ENCODE measurements at regions of chrX and their contacts with region 1.

Region 1: GRCh38 chrX:134396174-134396573 is 63.8 kb upstream of the HPRT1 start:
- DNase-seq: peak; percentile 16
- H3K4me3 ChIP-seq: no peak overlapping the region
- H3K27ac ChIP-seq: no peak overlapping the region
- H3K4me1 ChIP-seq: no peaks in the 10 kb centered on the region
- H3K27me3 ChIP-seq: no peaks in the 10 kb centered on the region
- CTCF ChIP-seq: peak; percentile 14 to 36
- POLR2A ChIP-seq: no peak

Region 2: GRCh38 chrX:132631579-132632232 is 1764.5 kb before region 1 on chrX:
- CTCF ChIA-PET with region 1: no interaction called
- POLR2A ChIA-PET with region 1: no interaction called
- dilution Hi-C with region 1: no loop called
- intact Hi-C with region 1: no loop called
- DNase-seq: peak; percentile 33
- H3K4me3 ChIP-seq: no peak overlapping the region
- H3K27ac ChIP-seq: no peak overlapping the region
- H3K4me1 ChIP-seq: no peaks in the 10 kb centered on the region
- H3K27me3 ChIP-seq: no peaks in the 10 kb centered on the region
- CTCF ChIP-seq: peak; percentile 27 to 30
- POLR2A ChIP-seq: no peak

Region 3: DNA sequence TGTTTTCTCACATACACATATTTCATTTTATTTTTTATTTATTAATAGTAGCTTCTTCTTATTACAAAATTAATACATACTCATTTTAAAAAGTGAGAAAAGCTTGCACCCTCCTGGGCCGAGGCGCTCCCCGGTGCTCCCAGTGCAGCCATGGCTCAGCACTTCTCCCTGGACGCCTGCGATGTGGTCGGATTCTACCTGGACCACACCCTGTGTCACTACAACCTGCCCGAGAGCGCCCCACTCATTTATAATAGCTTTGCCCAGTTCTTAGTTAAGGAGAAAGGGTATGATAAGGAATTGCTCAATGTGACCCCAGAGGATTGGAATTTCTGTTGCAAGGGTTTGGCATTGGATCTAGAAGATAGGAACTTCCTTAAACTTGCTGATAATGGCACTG is 124.0 kb before region 1 on chrX:
- CTCF ChIA-PET with region 1: no interaction called
- POLR2A ChIA-PET with region 1: no interaction called
- dilution Hi-C with region 1: no loop called
- intact Hi-C with region 1: no loop called
- DNase-seq: no peak
- H3K4me3 ChIP-seq: no peak overlapping the region
- H3K27ac ChIP-seq: no peak overlapping the region
- H3K4me1 ChIP-seq: no peaks in the 10 kb centered on the region
- H3K27me3 ChIP-seq: no peaks in the 10 kb centered on the region
- CTCF ChIP-seq: no peak
- POLR2A ChIP-seq: no peak

Region 4: DNA sequence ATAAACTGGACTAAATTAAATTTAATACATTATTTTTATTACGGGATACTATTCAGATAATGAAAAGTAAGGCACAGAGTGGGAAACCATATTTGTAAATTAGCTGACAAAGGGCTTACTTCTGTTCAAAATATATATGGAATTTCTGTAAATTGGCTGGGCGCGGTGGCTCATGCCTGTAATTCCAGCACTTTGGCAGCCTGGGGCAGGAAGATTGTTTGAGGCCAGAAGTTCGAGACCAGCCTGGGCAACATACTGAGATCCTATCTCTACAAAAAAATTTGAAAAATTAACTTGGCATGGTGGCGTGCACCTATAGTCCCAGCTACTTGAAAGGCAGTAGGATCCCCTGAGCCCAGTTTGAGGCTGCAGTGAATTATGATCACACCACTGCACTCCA is 40.2 kb before region 1 on chrX:
- CTCF ChIA-PET with region 1: no interaction called
- POLR2A ChIA-PET with region 1: no interaction called
- dilution Hi-C with region 1: no loop called
- intact Hi-C with region 1: no loop called
- DNase-seq: no peak
- H3K4me3 ChIP-seq: no peak overlapping the region
- H3K27ac ChIP-seq: no peak overlapping the region
- H3K4me1 ChIP-seq: no peaks in the 10 kb centered on the region
- H3K27me3 ChIP-seq: no peaks in the 10 kb centered on the region
- CTCF ChIP-seq: no peak
- POLR2A ChIP-seq: no peak

Region 5: DNA sequence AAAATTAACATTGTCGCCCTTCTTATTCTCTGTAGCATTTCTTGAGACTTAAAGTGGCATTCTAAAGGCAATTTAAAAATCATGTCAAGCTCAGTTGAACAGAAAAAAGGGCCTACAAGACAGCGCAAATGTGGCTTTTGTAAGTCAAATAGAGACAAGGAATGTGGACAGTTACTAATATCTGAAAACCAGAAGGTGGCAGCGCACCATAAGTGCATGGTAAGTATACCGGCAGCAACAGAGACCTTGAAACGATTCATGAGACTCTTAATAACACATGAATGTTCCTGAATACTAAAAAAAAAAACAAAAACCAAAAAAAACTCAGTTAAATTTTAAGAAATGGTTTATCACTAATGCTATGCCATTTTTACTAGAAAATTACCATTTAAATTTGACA is 18.6 kb before region 1 on chrX:
- CTCF ChIA-PET with region 1: interaction called, 22 read pairs
- POLR2A ChIA-PET with region 1: no interaction called
- dilution Hi-C with region 1: no loop called
- intact Hi-C with region 1: loop called (anchors 1 kb)
- DNase-seq: peak; percentile 45
- H3K4me3 ChIP-seq: no peak overlapping the region
- H3K27ac ChIP-seq: no peak overlapping the region
- H3K4me1 ChIP-seq: peaks cover 5% of the 10 kb centered on the region
- H3K27me3 ChIP-seq: no peaks in the 10 kb centered on the region
- CTCF ChIP-seq: peak; percentile 12 to 19
- POLR2A ChIP-seq: no peak